ENCODE measurements at regions of chr20 and their contacts with region 1.

Region 1: DNA sequence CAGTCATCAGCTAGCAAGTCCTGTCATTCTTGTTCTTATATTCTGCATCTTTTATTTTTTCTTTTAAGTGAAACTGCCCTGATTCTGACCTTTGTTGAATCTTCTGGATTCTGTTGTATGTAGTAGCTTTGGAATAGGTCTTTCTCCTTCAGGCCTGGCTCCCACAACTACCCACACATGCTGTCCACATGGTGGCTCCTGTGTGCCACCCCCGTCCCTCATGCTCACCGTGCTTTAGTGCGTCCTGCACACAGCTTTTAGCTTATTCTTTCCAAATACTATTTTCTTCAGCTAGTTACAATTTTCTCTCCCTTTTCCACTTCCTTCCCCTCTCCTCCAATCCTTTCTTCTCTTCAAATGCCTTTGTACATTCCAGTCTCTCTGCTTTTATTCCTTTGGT is 61.8 kb downstream of the CTNNBL1 start:
- DNase-seq: no peak
- H3K4me3 ChIP-seq: no peak overlapping the region
- H3K27ac ChIP-seq: no peak overlapping the region
- H3K4me1 ChIP-seq: no peaks in the 10 kb centered on the region
- H3K27me3 ChIP-seq: no peaks in the 10 kb centered on the region
- CTCF ChIP-seq: no peak

Region 2: GRCh38 chr20:37745553-37745952 is 10.1 kb before region 1 on chr20:
- CTCF ChIA-PET with region 1: interaction called, 3 read pairs
- POLR2A ChIA-PET with region 1: interaction called, 14 read pairs
- intact Hi-C with region 1: no loop called
- DNase-seq: no peak
- H3K4me3 ChIP-seq: no peak overlapping the region
- H3K27ac ChIP-seq: no peak overlapping the region
- H3K4me1 ChIP-seq: peaks cover 11% of the 10 kb centered on the region
- H3K27me3 ChIP-seq: no peaks in the 10 kb centered on the region
- CTCF ChIP-seq: no peak